ENCODE measurements at regions of chr5 and their contacts with region 1.

Region 1: DNA sequence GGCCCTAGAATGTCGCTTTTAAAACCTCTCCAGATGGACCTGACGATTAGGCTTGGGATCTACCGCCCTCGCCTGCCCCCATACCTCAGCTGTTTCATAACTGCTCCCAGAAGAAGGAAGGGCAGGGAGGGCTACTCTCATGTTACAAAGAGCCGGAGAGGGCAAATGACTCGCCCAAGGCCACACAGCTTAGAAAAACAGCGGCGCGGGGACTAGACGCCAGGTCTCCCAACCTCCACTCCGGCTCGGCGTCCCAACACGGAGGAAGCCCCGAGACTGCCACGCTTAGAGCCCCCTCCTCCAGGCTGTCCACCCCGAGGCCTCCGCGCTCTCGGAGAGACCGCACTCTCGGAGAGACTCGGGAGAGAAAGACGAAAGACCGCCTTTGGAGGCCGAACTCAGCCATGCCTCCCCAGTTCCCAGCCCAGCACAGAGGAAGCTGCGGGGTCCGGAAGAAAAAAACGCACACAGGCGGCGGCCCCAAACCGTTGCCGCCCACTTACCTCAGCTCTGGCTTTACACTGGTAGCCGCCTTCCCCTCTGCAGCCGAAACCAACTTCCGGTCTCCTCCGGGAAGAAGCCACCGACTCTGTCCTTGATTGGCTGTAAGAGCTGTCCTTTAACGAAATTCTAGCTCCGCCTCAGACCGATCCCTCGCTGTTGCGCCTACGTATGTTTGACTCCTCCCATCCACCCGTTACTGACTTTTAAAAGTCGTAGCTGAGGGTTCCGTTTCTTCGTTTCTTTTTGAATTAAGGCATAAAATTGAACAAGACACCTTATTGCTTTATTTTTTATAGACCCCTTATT is at the start of gene MED7:
- DNase-seq: peak; percentile 96
- total RNA-seq, gene MED7: 8.9 TPM

Region 2: GRCh38 chr5:156043351-156043750 is 1099.2 kb before region 1 on chr5:
- intact Hi-C with region 1: no loop called
- DNase-seq: no peak

Region 3: DNA sequence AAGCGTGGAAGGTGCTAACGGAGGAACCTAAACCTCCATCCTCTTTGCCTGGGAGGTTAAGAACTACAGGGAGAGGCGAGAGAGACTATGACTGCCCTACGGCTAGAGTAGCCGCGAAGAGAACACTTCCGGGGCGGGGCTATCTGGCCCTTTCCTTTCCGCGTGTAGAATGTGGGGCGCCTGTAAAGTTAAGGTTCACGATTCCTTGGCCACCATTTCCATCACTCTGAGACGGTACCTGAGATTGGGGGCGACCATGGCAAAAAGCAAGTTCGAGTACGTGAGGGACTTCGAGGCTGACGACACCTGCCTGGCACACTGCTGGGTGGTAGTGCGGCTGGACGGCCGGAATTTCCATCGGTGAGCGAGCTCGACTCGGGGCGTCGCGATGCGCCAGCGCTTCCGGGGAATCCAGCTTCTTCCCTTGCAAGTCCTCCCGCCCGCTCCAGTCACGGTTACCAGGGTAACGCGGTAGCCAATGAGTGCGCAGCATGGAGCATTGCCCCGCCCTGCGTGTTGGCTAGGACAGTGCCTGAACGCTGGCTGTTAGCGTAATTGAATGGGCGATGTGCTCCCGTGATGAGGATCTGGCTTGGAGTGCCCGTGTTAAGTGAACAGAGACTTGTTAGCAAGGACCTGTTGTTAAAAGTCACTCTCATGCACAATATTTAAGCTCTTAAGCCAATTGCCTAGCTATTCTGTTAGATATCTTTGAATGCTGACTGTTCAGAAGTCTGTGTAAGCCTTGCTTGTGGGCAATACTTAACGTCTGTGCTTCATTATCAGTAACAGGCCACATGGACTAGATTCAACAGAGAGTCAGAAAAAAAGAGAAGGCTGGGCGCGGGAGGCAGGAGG is 589.0 kb after region 1 on chr5 and contains the start of gene THG1L:
- intact Hi-C with region 1: loop called (anchors 10 kb)
- DNase-seq: peak; percentile 98
- total RNA-seq, gene THG1L: 6.2 TPM

Measured in cardiac septum (tissue), 1 donor.